ENCODE measurements at regions of chr18 and their contacts with region 1.

Region 1: GRCh38 chr18:21330122-21330701 is 88.2 kb downstream of the GREB1L start:
- DNase-seq: no peak
- ATAC-seq: peak; percentile 98

Region 2: DNA sequence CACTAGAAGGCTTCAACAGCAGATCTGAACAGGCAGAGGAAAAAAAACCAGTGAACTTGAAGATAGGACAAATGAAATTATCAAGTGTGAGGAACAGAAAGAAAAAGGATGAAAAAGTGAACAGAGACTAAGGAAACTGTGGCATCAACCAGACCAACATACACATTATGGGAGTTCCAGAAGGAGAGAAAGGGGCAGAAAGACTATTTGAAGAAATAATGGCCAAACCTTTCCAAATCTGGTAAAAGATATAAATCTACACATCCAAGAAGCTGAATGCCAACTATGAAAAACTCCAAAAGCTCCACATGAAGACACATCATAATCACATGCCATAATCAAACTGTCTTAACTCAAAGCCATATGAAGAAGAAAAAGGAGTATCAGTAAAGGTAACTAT is 298.4 kb before region 1 on chr18:
- intact Hi-C with region 1: no loop called
- DNase-seq: no peak
- ATAC-seq: no peak

Region 3: DNA sequence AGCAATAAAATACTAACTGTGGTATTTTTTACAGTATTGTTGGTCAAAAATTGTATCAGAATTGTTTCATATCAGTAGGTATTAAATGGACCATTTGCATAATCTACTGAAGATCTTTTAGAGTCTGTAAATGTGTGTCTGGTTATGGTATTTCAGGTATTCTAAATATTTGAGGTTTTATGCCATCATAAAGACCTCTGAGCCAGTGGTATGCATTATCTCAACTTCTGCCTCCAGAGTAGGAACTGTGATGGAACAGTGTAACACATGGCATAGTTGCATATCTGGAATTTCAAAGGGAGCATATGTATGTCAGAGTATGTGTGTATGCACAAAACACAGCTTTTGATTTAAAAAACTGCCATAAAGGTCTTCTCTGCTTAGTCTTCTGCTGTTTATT is 72.8 kb before region 1 on chr18:
- intact Hi-C with region 1: no loop called
- DNase-seq: no peak
- ATAC-seq: no peak

Region 4: DNA sequence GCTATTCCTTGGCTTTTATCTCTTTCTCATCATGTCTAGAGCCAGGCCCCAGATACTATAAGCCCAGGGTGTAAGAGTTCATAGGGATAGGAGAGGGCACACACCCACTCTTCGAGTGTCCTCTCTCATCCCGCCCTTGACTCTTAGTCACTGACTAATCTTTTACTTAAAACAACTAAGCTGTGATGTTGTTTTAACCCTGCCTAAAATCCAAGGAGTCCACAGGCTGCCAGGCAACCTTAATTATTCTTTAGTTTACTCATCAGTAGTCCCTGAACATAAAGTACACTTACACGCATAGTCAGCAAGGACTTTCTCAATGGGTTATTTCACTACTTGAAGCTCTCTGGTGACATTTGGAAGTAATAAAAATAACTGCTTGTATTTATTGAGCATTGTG is 59.8 kb before region 1 on chr18:
- intact Hi-C with region 1: loop called (anchors 2 kb)
- DNase-seq: no peak
- ATAC-seq: no peak